Posterior vena cava (tissue), 2 donors: ENCODE measurements at regions of chr9 and their contacts with region 1.

Region 1: GRCh38 chr9:8660383-8660782 is 860.8 kb upstream of the DMAC1 start:
- DNase-seq: peak; percentile 83

Region 2: GRCh38 chr9:8686516-8686915 is 26.1 kb after region 1 on chr9:
- intact Hi-C with region 1: no loop called
- DNase-seq: no peak

Region 3: DNA sequence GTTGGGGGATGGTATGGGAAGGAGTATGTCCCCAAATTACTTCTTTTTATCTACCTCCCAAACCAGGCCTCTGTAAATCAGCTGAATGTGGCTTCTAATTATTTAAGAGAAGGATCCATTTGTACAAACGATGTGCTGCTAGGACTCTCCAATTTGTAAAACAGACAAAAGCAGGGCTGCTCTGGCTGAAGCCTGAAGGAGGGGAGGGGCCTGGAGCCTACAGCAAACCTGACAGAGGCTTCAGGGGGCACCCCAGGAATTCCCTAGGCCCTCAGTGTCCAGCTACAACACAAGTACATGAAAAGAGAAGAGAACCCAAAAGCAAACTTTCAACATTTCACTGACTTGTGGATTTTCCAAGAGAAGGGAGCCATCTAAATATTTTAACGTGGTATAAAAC is 78.6 kb after region 1 on chr9:
- intact Hi-C with region 1: loop called in 1 of 2 experiments (anchors 1 kb)
- DNase-seq: no peak

Region 4: DNA sequence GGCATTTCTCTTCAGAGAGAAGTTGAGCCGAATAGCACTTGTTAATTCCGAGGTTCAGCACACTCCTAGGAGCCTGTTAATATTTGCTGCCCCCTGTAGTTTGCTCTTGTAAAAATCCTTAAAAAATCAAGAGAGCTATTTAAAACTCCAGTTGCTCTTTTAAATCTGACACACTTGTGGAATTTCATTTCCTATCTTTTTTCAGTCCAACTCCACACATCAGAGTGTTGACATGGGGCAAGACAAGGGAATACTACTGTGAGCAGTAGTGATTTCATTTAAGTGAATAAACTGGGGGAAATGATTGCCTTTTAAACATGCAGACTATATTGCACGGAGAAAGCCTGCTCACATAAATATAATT is 235.5 kb after region 1 on chr9:
- intact Hi-C with region 1: no loop called
- DNase-seq: no peak